Sigmoid colon (tissue), 7 donors: ENCODE measurements at regions of chr11 and their contacts with region 1.

Region 1: DNA sequence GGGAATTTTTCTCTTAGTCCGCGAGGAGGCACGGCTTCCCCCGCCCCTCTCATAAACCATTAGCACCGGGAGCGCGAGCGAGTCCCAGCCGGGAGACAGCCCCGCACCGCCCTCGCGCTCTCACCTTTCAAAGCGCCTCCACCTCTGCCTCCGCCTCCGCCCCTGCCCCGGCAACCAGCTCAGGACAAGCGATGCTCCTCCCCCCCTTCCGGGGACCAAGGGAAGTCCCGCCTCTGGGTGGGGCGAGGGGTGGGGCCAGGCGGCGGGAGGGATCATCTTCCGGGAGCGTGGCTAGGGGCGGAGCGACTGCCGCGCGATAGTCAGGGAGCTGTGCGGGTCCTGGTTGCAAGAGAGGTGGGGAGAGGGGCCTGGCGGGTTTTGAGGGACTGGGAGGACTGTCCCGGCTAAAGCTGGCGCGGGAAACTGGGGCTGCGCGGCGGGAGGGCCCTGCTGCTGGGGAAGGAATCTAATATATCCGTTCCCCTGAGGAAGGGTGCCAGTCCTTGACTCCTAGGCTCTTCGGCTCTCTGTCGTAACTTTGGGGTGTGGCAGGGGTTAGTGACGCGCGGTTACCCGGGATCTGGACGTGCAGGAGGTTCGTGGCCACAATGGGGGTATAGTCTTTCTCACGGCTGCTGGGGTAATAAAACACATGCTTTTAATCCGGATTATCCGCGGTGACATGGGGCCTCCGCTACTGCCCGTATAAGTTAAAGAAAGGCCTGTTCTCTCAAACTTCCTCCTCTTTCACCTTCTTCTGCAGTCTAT is at the starts of genes CCDC82 and JRKL:
- DNase-seq: peak; percentile 98
- H3K4me3 ChIP-seq: peak within 1 kb of the TSS; percentile 58 to 93 (median 76)
- H3K27ac ChIP-seq: peak within 1 kb of the TSS; percentile 87 to 91 (median 89)
- H3K4me1 ChIP-seq: peaks cover 0 to 23% (median 18%) of the 10 kb centered on the region in 4 donors
- H3K27me3 ChIP-seq: no peaks in the 10 kb centered on the region
- CTCF ChIP-seq: no peak
- EP300 ChIP-seq: no peak
- POLR2A ChIP-seq: peak in 1 of 2 donors; percentile 88
- total RNA-seq, gene CCDC82: 24.4 to 39.2 (median 33.8) TPM
- total RNA-seq, gene JRKL: 4.2 to 6.9 (median 6.3) TPM

Region 2: DNA sequence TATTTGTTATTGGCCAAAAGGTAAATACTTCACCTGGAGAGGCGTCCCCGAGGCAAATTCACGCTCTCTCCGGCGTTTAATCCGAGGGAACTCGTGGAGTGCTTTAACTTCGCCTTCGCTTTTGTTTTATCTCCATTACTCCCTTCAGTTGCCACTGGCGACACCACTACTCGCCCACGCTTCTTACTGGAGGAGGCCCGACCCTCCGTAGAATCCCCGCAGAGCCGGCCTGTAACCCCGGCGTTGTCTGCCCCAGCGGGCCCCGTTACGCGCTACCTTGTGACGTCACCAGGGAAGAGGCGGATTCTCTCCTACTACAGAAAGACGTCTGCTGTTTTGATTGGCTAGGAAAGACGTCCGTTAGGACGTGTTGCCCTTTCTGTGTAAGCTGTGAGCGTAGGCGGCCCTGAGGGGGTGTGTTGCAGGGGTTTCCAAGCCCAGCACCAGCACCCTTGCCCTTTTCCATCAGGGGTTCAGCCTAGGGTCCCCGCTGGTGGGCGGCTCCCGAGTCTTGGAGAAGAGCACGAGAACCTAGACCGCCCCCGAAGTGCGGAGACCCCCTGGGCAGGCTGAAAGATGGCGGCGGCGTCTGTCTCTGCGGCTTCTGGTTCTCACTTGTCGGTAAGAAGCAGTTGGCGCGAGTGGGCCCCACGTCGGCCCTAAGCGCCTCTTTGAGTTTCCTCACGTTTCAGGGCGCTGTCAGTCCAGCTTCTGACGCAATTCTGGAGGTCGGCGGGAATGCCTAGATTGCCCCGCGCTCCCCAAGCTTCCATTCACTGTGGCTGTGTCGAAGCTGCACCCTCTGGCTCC is 599.6 kb before region 1 on chr11 and contains the start of gene CEP57:
- intact Hi-C with region 1: loop called (anchors 5 kb)
- DNase-seq: peak; percentile 98
- H3K4me3 ChIP-seq: peak within 1 kb of the TSS; percentile 70 to 91 (median 88)
- H3K27ac ChIP-seq: peak within 1 kb of the TSS; percentile 96 to 99 (median 98)
- H3K4me1 ChIP-seq: peaks cover 0 to 28% (median 22%) of the 10 kb centered on the region in 4 donors
- H3K27me3 ChIP-seq: no peaks in the 10 kb centered on the region
- CTCF ChIP-seq: no peak
- EP300 ChIP-seq: no peak
- POLR2A ChIP-seq: peak; percentile 43 to 45
- total RNA-seq, gene CEP57: 35.8 to 71.3 (median 41.0) TPM

Region 3: GRCh38 chr11:95835768-95836488 is 554.0 kb before region 1 on chr11:
- intact Hi-C with region 1: loop called (anchors 1 kb)
- DNase-seq: peak; percentile 80
- H3K4me3 ChIP-seq: no peak overlapping the region
- H3K27ac ChIP-seq: peak overlapping the region in 2 of 4 donors; percentile 33 to 35
- H3K4me1 ChIP-seq: peaks cover 0 to 8% (median 0%) of the 10 kb centered on the region in 4 donors
- H3K27me3 ChIP-seq: no peaks in the 10 kb centered on the region
- CTCF ChIP-seq: peak; percentile 62 to 81 (median 79)
- EP300 ChIP-seq: no peak
- POLR2A ChIP-seq: no peak